HEK293 (cell line): ENCODE measurements at regions of chr13 and their contacts with region 1.

Region 1: DNA sequence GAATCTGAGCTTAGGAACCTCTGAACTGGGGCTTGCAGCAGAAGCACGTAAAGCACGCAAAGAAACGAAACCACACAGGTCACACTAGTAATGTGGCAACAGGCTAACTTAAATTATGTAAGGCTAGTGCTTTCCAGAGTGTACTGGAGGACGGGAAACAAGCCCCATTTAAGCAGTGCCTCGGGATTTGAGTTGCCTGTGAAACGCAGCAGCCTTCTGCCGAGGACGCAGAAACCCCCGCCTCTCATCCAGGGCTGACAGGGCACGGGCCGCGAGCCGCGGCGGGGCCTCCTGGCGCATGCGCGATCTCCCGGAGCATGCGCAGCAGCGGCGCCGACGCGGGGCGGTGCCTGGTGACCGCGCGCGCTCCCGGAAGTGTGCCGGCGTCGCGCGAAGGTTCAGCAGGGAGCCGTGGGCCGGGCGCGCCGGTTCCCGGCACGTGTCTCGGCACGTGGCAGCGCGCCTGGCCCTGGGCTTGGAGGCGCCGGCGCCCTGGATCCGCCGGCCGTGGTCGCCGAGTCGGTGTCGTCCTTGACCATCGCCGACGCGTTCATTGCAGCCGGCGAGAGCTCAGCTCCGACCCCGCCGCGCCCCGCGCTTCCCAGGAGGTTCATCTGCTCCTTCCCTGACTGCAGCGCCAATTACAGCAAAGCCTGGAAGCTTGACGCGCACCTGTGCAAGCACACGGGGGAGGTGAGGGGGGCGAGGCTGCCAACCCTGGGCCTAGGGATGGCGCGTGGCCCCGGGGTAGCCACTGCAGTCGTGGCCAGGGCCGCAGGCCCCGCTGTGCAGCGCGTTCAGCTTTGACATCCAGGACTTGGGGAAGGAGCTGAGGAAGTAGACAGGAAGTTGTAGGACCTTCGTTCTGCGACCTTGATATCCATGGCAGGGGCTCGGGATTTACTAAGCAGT is at the start of gene GTF3A:
- H3K4me3 ChIP-seq: peak within 1 kb of the TSS; percentile 62
- H3K27ac ChIP-seq: peak within 1 kb of the TSS; percentile 74
- H3K4me1 ChIP-seq: no peaks in the 10 kb centered on the region
- CTCF ChIP-seq: no peak

Region 2: GRCh38 chr13:27211771-27212364 is 212.6 kb before region 1 on chr13:
- CTCF ChIA-PET with region 1: no interaction called
- POLR2A ChIA-PET with region 1: no interaction called
- H3K4me3 ChIP-seq: no peak overlapping the region
- H3K27ac ChIP-seq: no peak overlapping the region
- H3K4me1 ChIP-seq: no peaks in the 10 kb centered on the region
- CTCF ChIP-seq: no peak

Region 3: DNA sequence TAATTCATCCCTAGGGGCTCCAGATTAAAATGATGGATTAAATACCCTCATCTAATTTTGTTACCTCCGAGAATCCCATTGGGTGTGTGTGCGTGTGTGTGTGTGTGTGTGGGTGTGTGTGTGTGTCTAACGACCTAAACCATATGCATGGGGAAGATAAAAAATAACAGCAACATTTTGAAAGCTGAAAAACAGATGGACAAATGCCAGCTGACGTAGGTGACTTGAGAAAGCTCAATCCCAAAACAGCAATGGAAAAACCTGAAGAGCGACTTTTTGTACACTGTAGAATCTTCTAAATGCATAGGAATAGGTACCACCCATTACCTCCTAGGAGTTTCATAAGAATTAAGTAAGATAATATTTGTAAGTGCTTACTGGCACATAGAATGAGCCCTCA is 181.8 kb before region 1 on chr13:
- CTCF ChIA-PET with region 1: no interaction called
- POLR2A ChIA-PET with region 1: no interaction called
- H3K4me3 ChIP-seq: no peak overlapping the region
- H3K27ac ChIP-seq: no peak overlapping the region
- H3K4me1 ChIP-seq: no peaks in the 10 kb centered on the region
- CTCF ChIP-seq: no peak

Region 4: DNA sequence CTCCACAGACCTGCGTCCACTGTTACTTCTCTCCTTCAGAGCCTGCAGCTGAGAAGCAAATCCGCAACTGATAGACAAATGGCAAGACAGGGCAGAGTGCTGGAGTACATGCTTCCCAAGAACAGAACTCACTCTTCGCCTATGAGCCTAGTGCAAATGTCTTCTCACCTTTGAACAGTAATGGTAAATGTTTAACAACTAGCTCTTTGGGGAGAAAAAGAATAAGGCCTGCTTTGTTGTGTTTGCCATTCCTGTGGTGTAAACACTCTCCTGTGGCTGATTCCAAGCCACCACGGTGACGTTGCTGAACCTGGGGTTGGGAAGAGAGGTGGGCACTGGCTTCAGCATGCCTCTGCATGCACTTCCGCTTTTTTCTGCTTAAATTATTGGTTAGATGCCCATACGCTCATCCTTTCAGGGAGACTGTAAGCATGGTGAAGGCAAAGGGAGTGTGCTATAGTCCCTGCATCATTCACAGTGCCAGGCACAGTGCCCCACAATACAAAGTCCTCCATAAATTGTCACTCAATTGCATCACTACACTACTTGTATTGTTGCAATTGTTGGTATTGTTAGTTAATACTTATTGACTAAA is 28.2 kb before region 1 on chr13:
- CTCF ChIA-PET with region 1: no interaction called
- POLR2A ChIA-PET with region 1: no interaction called
- H3K4me3 ChIP-seq: no peak overlapping the region
- H3K27ac ChIP-seq: no peak overlapping the region
- H3K4me1 ChIP-seq: no peaks in the 10 kb centered on the region
- CTCF ChIP-seq: no peak

Region 5: DNA sequence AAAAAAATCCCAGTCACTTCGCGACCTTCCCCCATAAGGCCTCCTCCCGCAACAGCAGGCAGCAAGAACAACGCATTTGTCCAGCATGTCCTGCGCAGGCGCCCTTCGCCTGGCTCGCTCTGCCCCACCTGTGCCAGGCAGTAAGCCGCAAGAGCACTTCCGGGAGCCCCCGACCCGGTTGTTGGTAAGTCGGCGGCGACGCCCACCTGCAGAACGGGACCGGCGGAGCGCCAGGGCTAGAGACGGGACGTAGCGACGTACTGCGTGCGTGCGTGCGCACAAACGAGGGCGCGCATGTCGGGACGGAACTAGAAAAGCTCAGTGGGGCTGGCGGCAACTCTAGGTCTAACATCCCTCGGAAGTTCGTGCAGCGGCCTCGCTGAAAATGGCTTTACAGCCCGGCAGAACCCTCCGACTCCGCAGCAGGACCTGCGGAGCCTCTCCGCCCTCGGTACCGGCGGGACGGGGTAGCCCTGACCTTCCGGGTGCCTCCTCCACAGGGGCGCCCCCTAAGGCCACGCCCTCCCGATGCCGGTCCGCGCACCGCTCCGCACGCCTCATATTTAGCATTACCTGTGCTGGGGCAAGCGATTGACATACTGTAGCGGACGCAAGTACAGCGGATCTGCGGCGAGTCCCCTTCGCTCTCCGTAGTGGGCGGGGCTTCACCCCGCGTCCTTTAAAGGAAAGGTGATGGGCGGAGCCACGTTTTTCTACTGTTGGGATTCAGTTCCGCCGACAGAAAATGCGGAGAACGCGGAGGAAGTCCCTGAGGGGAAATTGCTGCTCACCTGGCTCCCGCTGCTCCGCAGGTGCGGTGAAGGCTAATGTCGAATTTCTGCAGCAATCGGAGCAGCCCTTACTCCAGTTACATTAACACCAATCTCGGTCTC is 25.7 kb after region 1 on chr13 and contains the start of gene MTIF3:
- CTCF ChIA-PET with region 1: no interaction called
- POLR2A ChIA-PET with region 1: interaction called, 14 read pairs
- H3K4me3 ChIP-seq: peak within 1 kb of the TSS; percentile 79
- H3K27ac ChIP-seq: peak within 1 kb of the TSS; percentile 95
- H3K4me1 ChIP-seq: peaks cover 3% of the 10 kb centered on the region; the same call in 1 of the 2 replicates
- CTCF ChIP-seq: no peak; the same call in 1 of the 2 replicates